ENCODE measurements at regions of chr1 and their contacts with region 1.

Region 1: GRCh38 chr1:77978969-77979876 is at the start of gene FUBP1:
- DNase-seq: peak; percentile 95 to 99 (median 98)
- H3K4me3 ChIP-seq: peak within 1 kb of the TSS; percentile 66 to 84 (median 69)
- H3K27ac ChIP-seq: peak within 1 kb of the TSS; percentile 84 to 99 (median 99)
- H3K4me1 ChIP-seq: peaks cover 24 to 57% of the 10 kb centered on the region in 2 donors
- H3K27me3 ChIP-seq: no peaks in the 10 kb centered on the region
- CTCF ChIP-seq: peak; percentile 45 to 88 (median 76)
- POLR2A ChIP-seq: peak; percentile 87 to 96
- total RNA-seq, gene FUBP1: 65.8 to 169 (median 130) TPM

Region 2: DNA sequence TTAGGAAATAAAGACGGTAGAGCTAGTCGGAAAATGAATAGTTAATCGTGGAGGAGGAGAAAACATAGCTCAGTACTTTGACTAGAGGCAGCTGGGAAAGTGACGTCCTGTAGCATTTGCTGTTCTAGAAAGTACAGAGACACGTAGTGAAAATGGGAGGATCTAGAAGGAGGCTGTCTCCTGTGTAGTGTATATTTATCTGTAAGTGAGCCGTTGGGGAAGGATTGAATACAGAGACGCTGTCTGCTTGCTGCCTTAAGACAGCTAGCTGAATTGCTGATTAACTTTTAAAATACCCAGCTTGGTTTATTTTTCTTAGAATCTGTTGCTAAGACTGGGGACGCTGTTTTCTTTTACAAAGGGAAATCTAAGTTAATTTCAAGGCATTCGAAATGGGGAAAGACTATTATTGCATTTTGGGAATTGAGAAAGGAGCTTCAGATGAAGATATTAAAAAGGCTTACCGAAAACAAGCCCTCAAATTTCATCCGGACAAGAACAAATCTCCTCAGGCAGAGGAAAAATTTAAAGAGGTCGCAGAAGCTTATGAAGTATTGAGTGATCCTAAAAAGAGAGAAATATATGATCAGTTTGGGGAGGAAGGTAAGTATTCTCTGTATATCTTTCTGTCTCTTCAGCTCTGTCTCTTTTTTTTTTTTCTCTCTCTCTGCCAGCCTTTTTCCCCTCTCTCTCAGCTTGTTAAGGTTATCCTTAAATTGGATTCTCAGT is 25.7 kb after region 1 on chr1 and contains the start of gene DNAJB4:
- intact Hi-C with region 1: loop called in 1 of 2 experiments (anchors 2 kb)
- DNase-seq: peak; percentile 83 to 93 (median 86)
- H3K4me3 ChIP-seq: peak within 1 kb of the TSS in 3 of 4 donors; percentile 42 to 81 (median 71)
- H3K27ac ChIP-seq: peak within 1 kb of the TSS; percentile 83 to 95 (median 86)
- H3K4me1 ChIP-seq: peaks cover 0 to 51% of the 10 kb centered on the region in 2 donors
- H3K27me3 ChIP-seq: no peaks in the 10 kb centered on the region
- CTCF ChIP-seq: no peak
- POLR2A ChIP-seq: peak; percentile 98 to 100
- total RNA-seq, gene DNAJB4: 31.8 to 182 (median 76.1) TPM

Region 3: GRCh38 chr1:78114034-78114956 is 135.1 kb after region 1 on chr1:
- intact Hi-C with region 1: loop called in 1 of 2 experiments (anchors 10 kb)
- DNase-seq: peak; percentile 57 to 84 (median 67)
- H3K4me3 ChIP-seq: no peak overlapping the region
- H3K27ac ChIP-seq: peak overlapping the region in 2 of 5 donors; percentile 4 to 31
- H3K4me1 ChIP-seq: peaks cover 0 to 4% of the 10 kb centered on the region in 2 donors
- H3K27me3 ChIP-seq: no peaks in the 10 kb centered on the region
- CTCF ChIP-seq: peak; percentile 84 to 99 (median 94)
- POLR2A ChIP-seq: no peak

Measured in adrenal gland (tissue), 19 donors.